Dendritic cell treated with granulocyte-macrophage colony-stimulating factor and Interleukin-4, amounts not matched to agents 40 ng/mL and 50 ng/mL, for 4 days (primary cell): ENCODE measurements at regions of chr2 and their contacts with region 1.

Region 1: DNA sequence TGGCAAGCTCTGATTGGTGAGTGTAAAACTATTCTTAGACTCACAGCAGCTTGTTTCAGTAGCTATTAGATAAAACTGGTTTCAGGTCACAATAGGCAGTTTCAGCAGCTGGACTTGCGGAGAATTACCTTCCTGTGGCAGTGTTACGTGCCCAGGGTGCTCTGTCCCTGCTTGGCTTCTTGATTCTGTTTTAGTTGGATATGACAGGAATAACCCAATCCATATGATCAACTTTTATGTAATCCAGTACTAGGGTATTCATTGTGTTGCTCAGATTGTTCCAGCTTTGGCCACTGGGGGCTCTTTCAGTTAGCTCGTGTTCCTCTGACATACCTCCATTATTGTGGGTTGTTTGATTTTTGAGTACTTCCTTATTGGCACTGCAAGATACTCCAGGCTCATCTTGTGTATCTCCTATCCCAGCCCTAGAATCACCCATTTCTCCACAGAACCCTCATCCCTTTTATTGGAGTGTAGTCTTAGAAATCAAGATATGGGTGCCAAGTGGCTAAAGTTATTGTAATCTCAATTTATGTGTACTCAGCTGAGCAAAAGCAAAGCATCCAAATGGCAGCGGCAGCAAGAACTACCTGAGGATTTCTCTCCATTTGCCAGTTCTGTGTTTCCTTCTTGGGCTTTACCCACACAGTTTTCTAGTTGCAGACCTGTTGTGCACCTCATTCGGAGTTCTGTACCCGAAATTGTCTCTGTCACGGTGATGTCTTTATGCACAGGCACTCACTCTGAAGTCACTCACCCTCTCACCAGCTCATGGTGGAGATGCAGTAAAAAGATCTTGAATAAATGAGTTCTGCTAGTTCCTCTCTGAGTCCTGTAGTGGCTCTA is 43.4 kb downstream of the INPP4A start:
- H3K4me3 Mint-ChIP-seq: no peak overlapping the region
- H3K27ac Mint-ChIP-seq: peak overlapping the region; percentile 66
- H3K4me1 Mint-ChIP-seq: peaks cover 74% of the 10 kb centered on the region
- H3K27me3 Mint-ChIP-seq: no peaks in the 10 kb centered on the region

Region 2: GRCh38 chr2:98444436-98445176 is 43.4 kb before region 1 on chr2 and contains the start of gene INPP4A:
- intact Hi-C with region 1: loop called (anchors 5 kb)
- H3K4me3 Mint-ChIP-seq: peak within 1 kb of the TSS; percentile 86
- H3K27ac Mint-ChIP-seq: peak within 1 kb of the TSS; percentile 84
- H3K4me1 Mint-ChIP-seq: peaks cover 38% of the 10 kb centered on the region
- H3K27me3 Mint-ChIP-seq: no peaks in the 10 kb centered on the region

Region 3: GRCh38 chr2:98560256-98560771 is 72.3 kb after region 1 on chr2:
- intact Hi-C with region 1: no loop called
- H3K4me3 Mint-ChIP-seq: no peak overlapping the region
- H3K27ac Mint-ChIP-seq: no peak overlapping the region
- H3K4me1 Mint-ChIP-seq: peaks cover 14% of the 10 kb centered on the region
- H3K27me3 Mint-ChIP-seq: no peaks in the 10 kb centered on the region